Astrocyte of the cerebellum (primary cell): ENCODE measurements at regions of chr5 and their contacts with region 1.

Region 1: DNA sequence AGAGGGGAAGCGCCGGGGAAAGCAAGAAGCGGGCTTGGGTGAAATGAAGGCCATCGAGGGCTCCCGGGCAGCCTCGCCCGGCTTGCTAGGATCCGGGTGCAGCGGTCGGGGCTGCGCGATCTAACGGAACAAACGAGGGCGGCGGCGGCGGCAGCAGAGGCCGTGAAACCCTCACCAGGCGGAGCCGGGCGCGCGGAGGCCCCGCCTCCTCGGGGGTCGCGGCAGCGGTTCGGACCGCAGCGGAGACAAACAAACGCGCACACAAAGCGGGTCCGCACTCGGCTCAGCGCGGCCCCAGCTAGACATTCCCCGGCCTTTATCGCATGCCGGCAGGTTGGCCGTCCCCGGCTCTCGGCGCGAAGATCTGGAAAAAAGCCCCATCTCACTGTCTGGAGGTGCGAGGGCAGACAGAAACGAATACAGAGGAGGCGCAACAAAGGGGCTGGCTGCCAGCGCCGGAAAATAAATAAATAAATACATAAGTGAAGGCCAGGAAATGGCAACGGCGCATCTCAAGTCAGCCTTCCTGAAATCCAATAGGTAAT is 10.5 kb upstream of the TRIM36 start:
- DNase-seq: no peak
- H3K4me3 ChIP-seq: peak overlapping the region; percentile 57
- CTCF ChIP-seq: no peak

Region 2: DNA sequence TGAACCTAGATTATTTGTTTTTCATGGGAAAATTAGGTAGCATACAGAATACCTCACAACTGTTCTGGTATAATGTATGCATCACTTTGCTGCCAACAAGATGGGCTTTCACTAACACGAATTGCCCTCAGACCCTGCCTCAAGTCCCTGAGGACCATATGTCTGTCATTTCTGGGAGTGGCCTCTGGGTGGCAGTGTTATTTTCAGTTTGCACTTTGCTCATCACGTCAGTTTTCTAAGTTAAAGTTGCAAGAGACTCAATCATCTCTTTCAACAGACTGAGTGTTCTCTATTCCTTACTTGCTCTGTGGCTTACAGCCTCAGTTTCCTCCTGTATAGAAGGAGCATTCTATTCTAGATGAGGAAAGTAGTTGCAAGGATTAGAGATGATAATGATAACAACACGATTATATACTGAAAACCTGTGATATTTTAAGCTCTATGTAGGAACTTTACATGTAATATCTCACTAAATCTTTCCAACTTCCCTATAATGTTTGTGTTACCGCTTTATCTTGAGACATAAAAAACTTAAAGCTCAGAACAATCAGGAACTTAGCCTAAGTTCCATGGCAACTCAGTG is 1801.2 kb before region 1 on chr5:
- in situ Hi-C with region 1: loop called (anchors 25 kb)
- DNase-seq: peak; percentile 28
- H3K4me3 ChIP-seq: no peak overlapping the region
- CTCF ChIP-seq: peak; percentile 77